Activated CD4-positive, alpha-beta T cell treated with anti-CD3 and anti-CD28 coated beads, Interleukin-2, amount 10 ng/mL, durations not matched to agents 24 days and 14 days (primary cell): ENCODE measurements at regions of chr6 and their contacts with region 1.

Region 1: DNA sequence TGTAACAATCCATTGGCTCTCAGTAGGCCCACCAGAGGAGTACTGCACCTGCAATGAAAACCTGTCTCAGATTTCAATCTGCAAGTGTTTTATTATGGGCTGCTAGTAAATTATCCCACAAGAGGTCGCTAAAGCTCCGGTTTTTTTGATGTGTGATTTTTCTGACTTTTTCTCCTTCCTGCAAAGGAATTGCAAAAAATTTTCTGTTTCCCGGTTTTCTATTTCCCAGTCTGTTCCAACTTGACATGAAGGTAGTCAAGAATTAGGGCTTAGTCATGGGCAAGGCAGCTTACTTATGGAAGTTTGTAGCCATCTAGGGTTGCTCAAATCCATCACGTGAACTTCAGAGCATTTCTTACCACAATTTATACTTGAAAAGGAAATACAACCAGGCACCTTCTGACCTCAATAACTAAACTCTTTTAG is 38.5 kb upstream of the AHI1 start:
- DNase-seq: peak; percentile 82
- H3K4me3 Mint-ChIP-seq: peak overlapping the region; percentile 66
- H3K27ac Mint-ChIP-seq: peak overlapping the region; percentile 81
- H3K4me1 Mint-ChIP-seq: peaks cover 36% of the 10 kb centered on the region
- H3K27me3 Mint-ChIP-seq: no peaks in the 10 kb centered on the region

Region 2: DNA sequence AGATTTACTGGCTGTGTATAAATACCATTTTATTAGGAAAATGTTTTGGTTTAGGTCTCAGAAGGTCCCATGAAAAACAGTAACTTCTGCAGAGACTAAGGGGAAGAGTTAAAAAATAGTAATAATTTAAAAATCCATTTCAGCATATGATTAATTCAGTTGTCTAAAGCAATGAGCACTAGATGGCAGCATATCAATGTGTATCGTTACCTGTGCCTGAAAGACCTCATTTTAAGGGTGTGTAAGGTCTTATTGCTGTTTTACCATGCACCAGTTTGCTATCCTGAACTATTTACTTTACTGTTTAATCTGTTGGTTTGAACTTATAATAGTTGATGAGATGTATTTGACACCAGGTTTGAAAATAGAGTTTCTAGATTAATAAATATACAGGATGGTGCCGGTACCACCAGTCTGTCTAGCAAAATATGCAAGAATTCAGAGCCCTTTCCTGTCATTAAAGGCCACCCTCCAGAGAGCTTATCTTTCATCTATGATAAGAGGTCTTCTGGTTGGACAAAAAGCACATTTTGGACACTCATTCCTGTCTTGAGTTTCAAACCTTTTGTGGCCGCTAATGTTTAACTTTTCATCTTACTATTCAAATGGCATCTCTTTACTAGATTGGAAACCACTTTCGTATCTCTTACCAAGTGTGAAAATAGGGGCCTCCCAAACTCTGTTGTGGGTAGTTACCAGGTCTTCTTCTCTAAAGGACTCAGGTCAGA is 29.6 kb before region 1 on chr6:
- intact Hi-C with region 1: loop called (anchors 1 kb)
- DNase-seq: peak; percentile 79
- H3K4me3 Mint-ChIP-seq: no peak overlapping the region
- H3K27ac Mint-ChIP-seq: peak overlapping the region; percentile 77
- H3K4me1 Mint-ChIP-seq: peaks cover 9% of the 10 kb centered on the region
- H3K27me3 Mint-ChIP-seq: no peaks in the 10 kb centered on the region

Region 3: GRCh38 chr6:135577059-135577538 is 41.1 kb after region 1 on chr6:
- intact Hi-C with region 1: loop called (anchors 1 kb)
- DNase-seq: peak; percentile 74
- H3K4me3 Mint-ChIP-seq: peak overlapping the region; percentile 39
- H3K27ac Mint-ChIP-seq: peak overlapping the region; percentile 96
- H3K4me1 Mint-ChIP-seq: peaks cover 45% of the 10 kb centered on the region
- H3K27me3 Mint-ChIP-seq: no peaks in the 10 kb centered on the region

Region 4: DNA sequence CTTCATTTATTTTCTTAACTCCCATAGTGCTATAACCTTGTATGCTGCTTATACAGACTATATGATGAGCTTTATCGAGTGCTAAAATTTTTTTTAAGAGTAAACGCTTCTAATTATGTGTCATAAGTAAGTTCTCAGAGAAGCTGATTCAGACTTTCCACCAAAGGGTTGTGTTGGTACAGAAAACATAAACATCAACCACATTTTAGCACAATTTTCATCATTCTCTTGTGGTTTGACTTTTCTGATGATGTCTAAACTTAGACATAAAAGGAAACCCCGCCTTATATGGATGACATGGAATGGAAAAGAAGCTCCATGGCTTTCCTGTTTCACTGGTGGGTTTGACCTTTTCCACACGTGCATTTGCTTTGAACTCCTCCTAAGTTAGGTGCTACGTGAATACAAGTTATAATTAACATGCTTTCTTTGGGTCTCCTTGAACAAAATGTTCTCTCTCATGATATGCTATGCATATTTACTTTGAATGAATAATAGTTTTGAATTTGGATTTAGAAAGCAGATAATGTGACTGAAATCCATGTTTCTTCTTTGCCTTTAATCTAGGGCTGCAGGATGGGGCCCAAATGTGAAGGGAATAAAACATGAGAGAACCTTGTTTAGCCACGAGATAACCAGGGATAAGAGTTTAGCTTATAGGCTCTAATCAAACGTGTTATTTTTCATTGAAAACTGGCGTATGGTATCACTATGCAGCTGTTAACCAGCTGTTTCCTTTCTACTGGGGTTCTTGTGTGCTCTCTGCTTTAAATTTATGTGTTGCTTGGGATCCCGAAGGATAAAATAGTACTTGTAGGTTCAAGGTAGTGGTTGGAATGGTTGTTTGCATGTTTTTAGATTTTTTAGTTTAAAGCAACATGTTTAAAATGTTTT is 88.6 kb after region 1 on chr6:
- intact Hi-C with region 1: loop called (anchors 1 kb)
- DNase-seq: peak; percentile 83
- H3K4me3 Mint-ChIP-seq: peak overlapping the region; percentile 46
- H3K27ac Mint-ChIP-seq: peak overlapping the region; percentile 98
- H3K4me1 Mint-ChIP-seq: peaks cover 61% of the 10 kb centered on the region
- H3K27me3 Mint-ChIP-seq: no peaks in the 10 kb centered on the region

Region 5: DNA sequence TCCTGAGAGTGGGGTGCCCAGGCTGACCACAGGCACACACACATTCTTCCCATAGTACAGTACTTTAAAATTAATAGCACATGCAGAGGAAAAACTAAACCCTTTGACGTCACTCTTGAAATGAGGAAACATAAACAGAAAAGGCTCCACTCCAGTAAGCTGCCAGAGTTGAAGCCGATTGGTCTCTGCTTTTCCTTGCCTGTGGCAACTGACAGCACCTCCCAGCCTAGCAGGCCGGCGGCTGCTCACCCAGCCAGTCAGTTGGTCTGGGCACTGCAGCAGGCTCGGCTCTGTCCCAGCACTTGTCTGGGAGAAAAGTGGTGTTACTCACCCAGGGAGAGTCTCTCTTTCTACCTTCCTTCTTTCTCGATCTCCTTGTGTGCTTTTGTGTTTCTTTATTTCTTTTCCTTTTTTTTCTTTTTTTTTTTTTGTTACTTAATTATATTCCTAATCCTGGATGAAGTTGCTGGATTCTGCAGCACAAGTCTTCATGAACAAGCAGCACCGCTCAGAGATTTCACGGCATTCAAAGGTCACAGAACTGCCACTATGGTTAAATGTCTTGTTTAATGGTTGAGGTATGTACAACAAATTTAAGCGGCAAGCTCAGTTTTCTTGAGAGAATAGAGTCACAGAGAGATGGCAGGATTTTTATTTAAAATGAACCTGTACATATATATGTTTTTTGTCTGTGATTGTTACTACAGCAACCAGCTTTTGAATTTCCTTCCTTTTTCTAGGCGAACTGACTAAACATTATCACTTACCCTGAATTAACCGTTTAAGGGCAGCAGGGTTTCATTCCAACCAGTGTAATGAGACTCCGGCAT is 315.7 kb after region 1 on chr6 and contains the start of gene PDE7B:
- intact Hi-C with region 1: loop called (anchors 1 kb)
- DNase-seq: peak; percentile 91
- H3K4me3 Mint-ChIP-seq: peak within 1 kb of the TSS; percentile 81
- H3K27ac Mint-ChIP-seq: peak within 1 kb of the TSS; percentile 86
- H3K4me1 Mint-ChIP-seq: peaks cover 30% of the 10 kb centered on the region
- H3K27me3 Mint-ChIP-seq: no peaks in the 10 kb centered on the region
- total RNA-seq, gene PDE7B: 15.4 and 16.0 TPM in 2 replicates

Region 6: GRCh38 chr6:136289579-136290409 is 753.8 kb after region 1 on chr6 and contains the start of gene BCLAF1:
- intact Hi-C with region 1: loop called (anchors 1 kb)
- DNase-seq: peak; percentile 100
- H3K4me3 Mint-ChIP-seq: peak within 1 kb of the TSS; percentile 92
- H3K27ac Mint-ChIP-seq: peak within 1 kb of the TSS; percentile 100
- H3K4me1 Mint-ChIP-seq: peaks cover 41% of the 10 kb centered on the region
- H3K27me3 Mint-ChIP-seq: peaks cover 2% of the 10 kb centered on the region
- total RNA-seq, gene BCLAF1: 267 TPM in 2 replicates